Activated CD4-positive, alpha-beta memory T cell treated with anti-CD3 and anti-CD28 coated beads for 36 hours (primary cell): ENCODE measurements at regions of chr18 and their contacts with region 1.

Region 1: DNA sequence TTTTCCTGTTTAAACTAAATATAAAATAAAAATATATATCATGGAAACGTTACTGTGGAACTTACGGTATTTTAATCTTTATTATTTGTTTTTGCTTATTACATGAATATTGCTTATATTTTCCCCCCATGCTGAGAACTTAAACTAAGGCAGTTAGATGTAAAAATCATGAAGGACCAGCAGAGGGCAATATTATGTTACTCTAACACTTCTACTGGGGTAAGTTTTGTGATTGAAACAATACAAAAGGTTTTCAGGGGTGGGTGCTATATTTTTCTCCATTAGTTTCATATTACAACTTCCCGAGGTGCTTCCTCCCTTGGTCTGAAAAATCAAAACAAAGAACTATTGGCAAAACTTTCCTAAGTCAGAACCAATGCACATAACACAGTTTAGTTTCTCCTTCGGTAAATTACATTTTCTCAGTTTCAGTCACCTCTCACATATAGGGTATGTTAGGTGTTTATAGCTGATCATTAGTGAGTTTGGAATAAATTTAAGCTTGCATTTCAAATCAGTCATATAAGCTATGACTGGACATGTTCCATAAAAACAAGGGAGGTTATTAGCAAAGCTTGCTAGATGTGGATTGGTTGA is 54.8 kb downstream of the ZNF407 start:
- DNase-seq: no peak
- H3K4me3 Mint-ChIP-seq: no peak overlapping the region
- H3K27ac Mint-ChIP-seq: no peak overlapping the region
- H3K4me1 Mint-ChIP-seq: peaks cover 3% of the 10 kb centered on the region
- H3K27me3 Mint-ChIP-seq: no peaks in the 10 kb centered on the region

Region 2: GRCh38 chr18:74896390-74896991 is 244.0 kb after region 1 on chr18:
- CTCF ChIA-PET with region 1: no interaction called
- POLR2A ChIA-PET with region 1: no interaction called
- intact Hi-C with region 1: loop called (anchors 10 kb)
- DNase-seq: peak; percentile 56
- H3K4me3 Mint-ChIP-seq: no peak overlapping the region
- H3K27ac Mint-ChIP-seq: no peak overlapping the region
- H3K4me1 Mint-ChIP-seq: peaks cover 4% of the 10 kb centered on the region
- H3K27me3 Mint-ChIP-seq: no peaks in the 10 kb centered on the region

Region 3: DNA sequence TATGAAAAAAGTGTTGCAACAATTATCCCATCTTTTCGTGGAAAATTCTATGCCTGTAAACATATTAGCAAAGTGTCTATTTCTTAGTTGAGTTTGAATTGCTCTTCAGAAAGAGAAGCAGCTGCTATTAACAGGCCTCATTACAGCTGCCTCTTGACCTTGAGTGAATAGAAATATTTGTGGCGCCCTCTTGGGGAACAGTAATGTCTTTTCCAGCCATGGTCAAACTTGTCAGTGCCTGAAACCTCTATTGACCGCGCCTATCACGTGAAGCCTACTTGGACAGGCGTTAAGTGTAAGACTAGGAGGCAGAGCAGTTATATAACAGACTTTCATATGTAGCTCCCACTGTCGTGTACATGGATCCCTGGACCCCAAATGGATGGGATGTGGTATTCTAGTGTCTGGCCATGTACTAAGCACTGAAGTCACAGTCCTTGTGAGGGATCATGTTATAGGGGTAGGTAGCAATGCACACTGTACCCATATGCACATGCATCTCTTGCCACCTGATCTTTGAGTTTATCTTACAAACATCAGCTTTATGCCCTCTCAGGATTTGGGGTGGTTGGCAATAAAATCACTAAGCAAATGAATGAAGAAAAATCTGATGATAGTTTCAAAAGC is 311.4 kb after region 1 on chr18:
- CTCF ChIA-PET with region 1: no interaction called
- POLR2A ChIA-PET with region 1: no interaction called
- intact Hi-C with region 1: loop called (anchors 2 kb)
- DNase-seq: no peak
- H3K4me3 Mint-ChIP-seq: no peak overlapping the region
- H3K27ac Mint-ChIP-seq: no peak overlapping the region
- H3K4me1 Mint-ChIP-seq: no peaks in the 10 kb centered on the region
- H3K27me3 Mint-ChIP-seq: no peaks in the 10 kb centered on the region

Region 4: DNA sequence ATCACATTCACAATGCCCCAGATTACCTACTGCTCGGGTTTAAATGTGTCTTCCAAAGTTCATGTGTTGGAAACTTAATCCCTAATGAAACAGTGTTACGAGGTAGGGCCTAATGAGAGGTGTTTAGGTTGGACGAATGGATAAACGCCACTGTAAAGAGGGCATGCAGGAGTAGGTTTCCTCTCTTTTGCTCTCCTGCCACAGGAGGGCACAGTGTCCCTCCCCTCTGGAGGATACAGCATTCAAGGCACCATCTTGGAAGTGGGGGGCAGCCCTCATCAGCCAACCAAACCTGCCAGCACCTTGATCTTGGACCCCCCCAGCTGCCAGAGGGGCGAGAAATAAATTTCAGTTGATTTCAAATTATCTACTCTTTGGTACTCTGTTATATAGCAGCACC is 661.6 kb after region 1 on chr18:
- CTCF ChIA-PET with region 1: no interaction called
- POLR2A ChIA-PET with region 1: no interaction called
- intact Hi-C with region 1: no loop called
- DNase-seq: no peak
- H3K4me3 Mint-ChIP-seq: no peak overlapping the region
- H3K27ac Mint-ChIP-seq: no peak overlapping the region
- H3K4me1 Mint-ChIP-seq: no peaks in the 10 kb centered on the region
- H3K27me3 Mint-ChIP-seq: no peaks in the 10 kb centered on the region

Region 5: GRCh38 chr18:75478996-75479880 is 826.7 kb after region 1 on chr18:
- CTCF ChIA-PET with region 1: interaction called, 6 read pairs
- POLR2A ChIA-PET with region 1: no interaction called
- intact Hi-C with region 1: loop called (anchors 1 kb)
- DNase-seq: no peak
- H3K4me3 Mint-ChIP-seq: no peak overlapping the region
- H3K27ac Mint-ChIP-seq: no peak overlapping the region
- H3K4me1 Mint-ChIP-seq: peaks cover 2% of the 10 kb centered on the region
- H3K27me3 Mint-ChIP-seq: peaks cover 15% of the 10 kb centered on the region

Region 6: DNA sequence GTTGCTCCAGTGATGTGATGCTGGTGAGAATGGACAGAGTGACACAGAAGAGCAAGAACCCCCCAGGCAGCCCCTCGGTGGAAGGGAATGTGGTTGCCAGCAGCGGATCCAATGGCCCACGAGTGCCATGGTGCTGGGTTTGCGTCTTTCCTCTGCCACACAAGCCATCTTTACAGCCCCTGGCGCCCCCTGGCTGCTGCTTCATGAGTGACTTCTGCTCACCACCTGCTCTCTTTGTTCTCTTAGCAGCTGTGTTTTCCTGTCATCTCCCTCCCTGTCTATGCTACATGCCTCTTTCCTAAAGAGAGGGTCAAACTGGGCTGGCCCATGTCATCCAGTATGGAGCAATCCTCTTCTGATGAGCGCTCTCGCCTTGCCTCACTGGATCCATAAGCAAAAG is 1075.0 kb after region 1 on chr18:
- CTCF ChIA-PET with region 1: interaction called, 4 read pairs
- POLR2A ChIA-PET with region 1: no interaction called
- intact Hi-C with region 1: loop called (anchors 2 kb)
- DNase-seq: peak; percentile 52
- H3K4me3 Mint-ChIP-seq: no peak overlapping the region
- H3K27ac Mint-ChIP-seq: no peak overlapping the region
- H3K4me1 Mint-ChIP-seq: no peaks in the 10 kb centered on the region
- H3K27me3 Mint-ChIP-seq: peaks cover 33% of the 10 kb centered on the region

Region 7: DNA sequence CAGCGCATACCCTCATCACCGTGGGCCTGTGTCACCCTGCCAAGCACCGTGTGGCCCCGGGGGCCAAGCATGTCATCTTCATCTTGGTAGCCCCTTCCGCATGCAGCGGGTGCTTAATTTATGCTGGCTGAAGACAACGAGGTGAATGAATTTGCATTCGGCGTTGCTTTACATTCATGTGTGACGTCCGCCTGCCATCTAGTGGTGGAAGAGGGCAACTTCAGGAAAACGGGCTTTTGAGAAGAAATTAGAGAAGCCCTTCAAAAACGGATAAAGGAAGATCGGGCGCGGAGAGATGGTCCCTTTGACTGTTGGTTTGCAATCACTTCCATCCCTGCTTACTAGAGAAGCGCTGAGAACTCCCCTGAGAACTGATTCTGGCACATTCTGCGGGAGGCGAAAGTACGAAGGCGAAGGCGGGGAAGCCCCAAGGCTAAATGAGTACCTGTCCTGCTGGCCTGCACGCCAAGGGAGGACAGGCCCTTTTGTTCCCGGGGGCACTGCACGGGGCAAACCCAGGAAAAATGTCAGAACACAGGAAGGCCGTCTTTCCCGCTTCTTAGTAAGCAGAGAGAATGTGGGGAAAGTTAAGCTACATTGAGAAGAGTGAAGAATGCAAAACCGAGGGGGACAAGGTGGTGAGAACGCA is 1696.7 kb after region 1 on chr18:
- CTCF ChIA-PET with region 1: no interaction called
- POLR2A ChIA-PET with region 1: no interaction called
- intact Hi-C with region 1: loop called (anchors 2 kb)
- DNase-seq: peak; percentile 74
- H3K4me3 Mint-ChIP-seq: no peak overlapping the region
- H3K27ac Mint-ChIP-seq: no peak overlapping the region
- H3K4me1 Mint-ChIP-seq: peaks cover 6% of the 10 kb centered on the region
- H3K27me3 Mint-ChIP-seq: peaks cover 3% of the 10 kb centered on the region